Dendritic cell treated with granulocyte-macrophage colony-stimulating factor and Interleukin-4, amounts not matched to agents 40 ng/mL and 50 ng/mL, for 4 days (primary cell): ENCODE measurements at regions of chr12 and their contacts with region 1.

Region 1: GRCh38 chr12:8108808-8109398 is 14.5 kb upstream of the CLEC4A start:
- H3K4me3 Mint-ChIP-seq: no peak overlapping the region
- H3K27ac Mint-ChIP-seq: peak overlapping the region; percentile 26
- H3K4me1 Mint-ChIP-seq: peaks cover 20% of the 10 kb centered on the region
- H3K27me3 Mint-ChIP-seq: no peaks in the 10 kb centered on the region

Region 2: DNA sequence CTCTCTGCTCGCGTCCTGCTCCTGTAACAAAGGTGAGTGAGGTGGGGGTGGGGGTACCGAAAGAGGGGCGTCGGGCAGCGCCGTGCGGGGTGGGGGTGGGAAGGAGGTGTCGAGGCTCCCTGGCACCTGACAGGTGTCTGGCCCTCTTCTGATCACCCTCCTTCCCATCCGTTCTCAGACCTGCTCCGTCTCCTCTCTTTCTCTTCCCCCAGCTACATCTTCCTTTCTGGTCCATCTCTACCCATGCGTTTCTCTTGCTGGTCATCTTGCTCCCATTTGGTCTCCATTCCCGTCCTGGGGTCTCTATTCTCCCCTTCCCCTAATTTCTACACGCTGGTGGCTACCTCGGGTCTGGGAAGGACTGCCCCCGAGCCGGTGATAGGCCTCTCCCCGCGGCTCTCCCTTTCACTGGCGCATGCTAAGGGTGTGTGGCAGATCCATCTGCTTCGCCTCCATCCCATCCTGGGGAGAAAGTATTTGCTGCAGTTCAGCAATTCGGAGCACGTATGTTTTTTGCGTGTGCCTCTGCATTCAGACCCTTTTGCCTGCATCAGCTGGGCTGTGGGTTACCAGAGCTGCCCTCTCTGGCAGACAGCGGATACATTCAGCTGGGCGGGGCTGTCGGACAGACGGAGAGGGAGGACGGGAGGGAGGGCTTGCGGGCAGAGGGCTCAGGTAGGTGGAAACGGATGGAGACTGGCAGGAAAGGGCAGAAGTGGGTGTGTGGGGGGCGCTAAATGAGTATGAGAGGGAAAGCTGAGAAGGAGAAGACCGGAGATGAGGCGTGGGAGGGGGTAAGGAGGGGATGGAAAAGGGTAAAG is 978.0 kb before region 1 on chr12:
- intact Hi-C with region 1: no loop called
- H3K4me3 Mint-ChIP-seq: peak overlapping the region; percentile 48
- H3K27ac Mint-ChIP-seq: no peak overlapping the region
- H3K4me1 Mint-ChIP-seq: peaks cover 53% of the 10 kb centered on the region
- H3K27me3 Mint-ChIP-seq: peaks cover 59% of the 10 kb centered on the region

Region 3: DNA sequence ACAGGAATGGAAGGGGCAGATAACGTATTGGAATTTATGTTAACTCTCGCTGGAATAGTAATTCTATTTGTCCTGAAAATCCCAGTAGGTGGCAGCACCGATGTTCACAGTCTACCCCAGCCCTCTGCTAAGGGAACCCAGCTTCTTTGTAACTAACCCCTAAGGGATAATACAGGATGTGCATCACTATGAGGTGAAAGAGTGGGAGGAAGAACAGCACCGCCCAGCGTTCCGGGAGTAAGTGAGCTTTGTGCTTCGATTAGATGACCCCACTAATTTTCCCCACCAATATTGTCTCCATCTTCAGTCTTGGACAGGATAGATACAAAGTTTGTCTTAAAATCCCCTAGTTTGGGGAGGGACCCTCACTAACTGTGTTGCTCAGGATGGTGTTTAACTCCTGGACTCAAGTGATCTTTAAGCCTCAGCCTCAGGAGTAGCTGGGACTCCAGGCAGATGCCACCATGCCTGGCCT is 175.6 kb before region 1 on chr12:
- intact Hi-C with region 1: no loop called
- H3K4me3 Mint-ChIP-seq: no peak overlapping the region
- H3K27ac Mint-ChIP-seq: no peak overlapping the region
- H3K4me1 Mint-ChIP-seq: peaks cover 32% of the 10 kb centered on the region
- H3K27me3 Mint-ChIP-seq: no peaks in the 10 kb centered on the region

Region 4: DNA sequence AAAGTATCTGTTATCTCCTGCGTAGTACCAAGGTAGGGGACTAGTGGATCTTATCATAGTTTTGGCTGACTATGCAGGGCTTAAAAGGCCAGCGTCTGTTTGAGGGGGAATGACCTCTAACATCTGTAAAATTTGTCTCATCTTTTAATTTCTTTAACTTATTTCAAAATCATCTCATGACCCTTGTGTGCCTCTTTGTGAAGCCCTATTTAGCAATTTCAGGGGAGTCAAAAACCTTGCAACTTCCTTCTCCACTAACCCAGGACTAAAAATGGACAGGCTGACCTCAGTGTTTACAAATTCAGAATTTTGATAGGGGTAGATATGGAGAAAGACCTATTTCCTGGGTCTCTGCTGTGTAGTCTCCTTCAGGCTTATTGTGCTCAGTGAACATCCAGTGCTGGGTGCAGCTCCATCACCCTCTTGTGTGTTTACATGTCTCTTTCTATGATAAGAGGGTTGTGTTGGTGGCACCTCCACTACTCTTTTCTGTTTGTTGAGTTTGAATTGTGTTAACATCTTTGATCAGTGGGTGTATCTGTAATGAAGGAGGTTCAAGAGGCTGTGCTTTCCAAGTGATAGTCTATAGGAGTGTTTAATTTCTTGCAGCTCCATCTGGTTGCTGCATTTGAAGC is 12.5 kb before region 1 on chr12:
- intact Hi-C with region 1: no loop called
- H3K4me3 Mint-ChIP-seq: no peak overlapping the region
- H3K27ac Mint-ChIP-seq: peak overlapping the region; percentile 20
- H3K4me1 Mint-ChIP-seq: peaks cover 21% of the 10 kb centered on the region
- H3K27me3 Mint-ChIP-seq: no peaks in the 10 kb centered on the region

Region 5: GRCh38 chr12:8226355-8226754 is 117.5 kb after region 1 on chr12:
- intact Hi-C with region 1: loop called (anchors 5 kb)
- H3K4me3 Mint-ChIP-seq: no peak overlapping the region
- H3K27ac Mint-ChIP-seq: peak overlapping the region; percentile 91
- H3K4me1 Mint-ChIP-seq: peaks cover 48% of the 10 kb centered on the region
- H3K27me3 Mint-ChIP-seq: peaks cover 1% of the 10 kb centered on the region